ENCODE measurements at regions of chr10 and their contacts with region 1.

Region 1: DNA sequence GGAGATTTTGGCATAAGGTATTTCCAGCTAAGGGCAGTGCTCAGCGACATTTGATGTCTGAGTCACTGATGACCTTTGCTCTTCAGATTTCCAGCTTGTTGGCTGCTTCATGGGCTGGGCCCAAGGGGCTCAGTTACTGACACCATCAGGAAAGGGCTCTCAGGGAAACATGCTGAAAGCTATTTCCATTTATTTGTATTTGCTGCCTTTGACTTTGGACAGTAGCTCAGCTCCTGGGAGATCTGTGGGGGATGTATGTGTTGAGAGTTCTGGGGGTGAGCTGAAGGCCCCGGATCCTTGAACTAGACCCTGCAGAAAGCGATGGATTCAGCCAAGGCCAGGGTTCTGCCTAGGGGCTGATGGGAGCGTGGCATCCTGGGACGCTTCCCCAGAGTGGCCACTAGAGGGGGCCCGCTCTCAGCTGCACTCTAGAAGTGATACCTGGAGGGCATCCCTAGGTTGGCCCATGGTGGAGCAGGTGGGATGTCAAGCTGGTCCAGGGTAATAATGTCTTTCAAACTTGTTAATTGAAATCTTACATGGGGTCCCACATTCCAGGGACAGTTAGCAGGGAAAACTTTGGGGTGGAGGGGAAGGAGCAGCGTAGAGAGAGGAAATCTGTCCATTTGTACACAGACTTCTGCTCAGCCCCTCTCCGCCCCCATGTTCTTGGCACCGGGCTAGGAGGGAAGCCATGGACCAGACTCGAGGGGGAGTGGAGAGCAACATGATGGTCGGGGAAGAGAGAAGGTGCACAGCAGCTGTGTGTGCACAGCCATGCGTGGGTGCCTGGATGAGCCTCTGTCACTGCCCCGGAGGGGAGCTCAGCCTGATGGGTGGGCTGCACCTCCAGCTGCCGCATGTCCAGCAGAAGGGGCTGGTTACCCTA is 3.0 kb upstream of the BTBD16 start:
- DNase-seq: peak; percentile 83
- CTCF ChIP-seq: peak; percentile 91

Region 2: DNA sequence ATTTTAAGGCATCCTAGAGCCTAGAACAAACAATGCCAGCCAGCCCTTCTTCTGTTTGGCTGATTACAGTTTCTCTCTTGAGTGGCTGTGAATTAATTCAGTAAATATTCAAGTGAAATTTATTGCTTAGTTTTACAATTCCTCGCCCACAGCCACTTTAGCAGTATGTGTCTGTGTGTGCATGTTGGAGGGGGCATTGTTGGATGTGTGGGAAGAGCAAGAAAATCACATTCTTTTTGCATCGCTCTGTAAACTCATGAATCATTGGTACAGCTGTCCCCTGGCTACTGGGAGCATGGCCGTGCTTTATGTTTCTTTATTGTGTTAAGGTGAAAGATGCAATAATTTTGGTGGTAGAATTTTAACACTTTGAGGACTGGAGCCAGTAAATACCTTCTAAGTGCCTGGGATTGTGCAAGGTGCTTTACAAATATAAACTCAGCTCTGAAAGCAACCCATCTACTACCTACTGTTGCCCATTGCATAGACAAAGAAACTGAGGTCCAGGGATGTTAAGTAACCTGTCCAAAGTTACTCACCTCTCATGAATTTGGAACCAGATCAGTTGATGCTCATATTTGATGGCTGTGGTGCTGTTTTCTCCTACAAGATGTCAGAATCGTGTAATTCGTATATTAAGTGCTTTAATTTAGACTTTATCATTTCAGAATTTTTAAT is 86.9 kb before region 1 on chr10:
- CTCF ChIA-PET with region 1: no interaction called
- POLR2A ChIA-PET with region 1: no interaction called
- DNase-seq: no peak
- CTCF ChIP-seq: no peak

Region 3: DNA sequence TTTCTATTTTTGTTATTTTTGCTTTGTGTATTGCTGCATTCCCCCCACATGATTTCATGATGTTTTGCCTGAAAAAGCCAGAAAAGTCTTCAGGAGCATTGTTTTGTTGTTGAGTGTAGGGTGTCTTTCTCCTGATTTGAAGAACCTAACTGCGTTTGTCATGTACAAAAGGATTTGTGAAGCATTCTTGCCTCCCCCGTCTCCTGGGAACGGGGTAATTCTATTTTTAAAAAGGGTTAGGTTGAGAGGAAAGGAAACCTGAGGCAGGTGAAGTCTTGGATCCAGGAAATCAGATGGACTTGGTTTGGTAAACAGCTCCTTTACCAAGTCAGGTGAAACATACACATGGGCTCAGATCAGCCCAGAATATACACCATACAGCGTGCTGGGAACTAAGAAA is 23.0 kb before region 1 on chr10:
- CTCF ChIA-PET with region 1: interaction called, 13 read pairs
- POLR2A ChIA-PET with region 1: no interaction called
- DNase-seq: no peak
- CTCF ChIP-seq: no peak

Region 4: DNA sequence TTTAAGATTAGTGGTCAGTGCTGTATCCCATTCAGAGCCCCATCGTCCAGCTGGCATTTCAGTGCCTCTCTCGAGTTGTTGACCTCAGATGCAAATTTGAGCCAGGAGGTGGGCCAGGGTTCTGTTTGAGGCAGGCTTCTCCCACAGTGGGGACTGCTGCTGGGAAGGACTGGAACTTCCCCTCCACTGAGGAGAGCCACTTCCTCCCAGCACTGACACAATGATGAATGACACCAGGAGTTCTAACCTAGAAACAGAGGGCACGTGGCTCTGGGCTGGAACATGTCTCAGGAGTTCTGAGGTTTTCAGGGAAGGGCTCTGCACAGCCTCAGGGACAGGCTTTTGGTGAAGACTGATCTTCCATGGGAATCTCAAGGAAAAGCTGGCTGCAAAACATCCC is 15.3 kb before region 1 on chr10:
- CTCF ChIA-PET with region 1: interaction called, 31 read pairs
- POLR2A ChIA-PET with region 1: no interaction called
- DNase-seq: no peak
- CTCF ChIP-seq: no peak

Region 5: DNA sequence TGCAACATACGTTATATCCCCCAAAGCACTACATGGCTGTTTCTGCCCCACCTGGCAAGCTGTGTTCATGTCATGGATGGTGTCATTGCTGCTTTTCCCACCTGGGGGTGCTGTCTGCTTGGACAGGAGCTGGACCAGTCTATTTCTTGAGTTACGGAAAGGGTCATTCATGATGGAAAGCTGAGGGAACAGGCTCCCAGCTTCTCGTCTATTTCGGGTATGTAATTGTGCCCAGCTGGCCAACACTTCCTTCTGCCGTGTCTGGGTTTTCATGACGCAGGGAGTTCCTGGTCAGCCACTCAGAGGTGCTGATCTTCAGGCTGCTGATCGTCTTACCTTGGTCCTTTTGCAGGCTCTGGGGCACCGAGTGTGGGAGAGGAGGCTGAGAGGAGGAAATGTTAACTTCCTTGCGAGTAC is 11.6 kb after region 1 on chr10:
- CTCF ChIA-PET with region 1: interaction called, 57 read pairs
- POLR2A ChIA-PET with region 1: no interaction called
- DNase-seq: peak; percentile 37
- CTCF ChIP-seq: peak; percentile 67

Region 6: GRCh38 chr10:122374237-122374869 is 106.3 kb after region 1 on chr10 and contains the start of gene PLEKHA1:
- CTCF ChIA-PET with region 1: no interaction called
- POLR2A ChIA-PET with region 1: no interaction called
- DNase-seq: peak; percentile 90
- CTCF ChIP-seq: no peak